GM23248 (cell line): ENCODE measurements at regions of chr3 and their contacts with region 1.

Region 1: DNA sequence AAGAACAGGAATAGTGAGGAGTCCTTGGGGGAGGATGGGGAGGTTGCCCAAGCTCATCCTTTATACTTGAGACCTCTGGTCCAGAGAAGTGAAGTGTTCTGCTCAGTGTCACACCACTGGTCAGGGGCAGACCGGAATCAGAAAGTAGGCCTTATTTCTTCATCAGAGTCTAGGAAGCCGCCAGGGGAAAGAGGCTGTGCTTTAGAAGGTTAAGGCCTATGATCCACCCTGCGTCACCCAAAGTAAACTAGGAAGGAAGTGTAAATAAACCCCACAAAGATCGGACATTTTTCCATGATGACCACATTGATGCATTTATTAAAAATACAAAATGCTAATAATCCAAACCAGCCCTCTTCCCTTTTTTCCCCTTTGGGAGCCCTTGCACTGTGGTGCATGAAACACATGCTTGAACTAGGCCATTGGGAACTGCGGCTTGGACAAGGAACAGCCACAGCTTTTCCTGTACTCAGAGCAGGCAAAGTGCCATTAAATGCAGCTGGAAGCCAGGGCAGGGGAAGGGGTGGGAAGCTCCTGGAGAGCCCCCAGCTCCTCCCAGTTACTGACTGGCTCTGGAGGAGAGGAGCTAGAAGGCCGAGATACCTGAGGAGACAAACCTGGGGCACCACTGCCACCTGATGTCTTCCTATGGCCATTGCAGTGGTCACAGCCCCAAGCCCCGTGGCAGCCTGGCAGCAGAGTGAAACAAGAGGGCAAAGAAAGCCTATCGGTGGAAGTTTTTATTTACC is 37.0 kb downstream of the CDC25A start:
- DNase-seq: peak; percentile 87
- H3K4me3 ChIP-seq: no peak overlapping the region
- H3K27ac ChIP-seq: no peak overlapping the region
- H3K4me1 ChIP-seq: peaks cover 13% of the 10 kb centered on the region; the same call in 1 of the 2 replicates
- H3K27me3 ChIP-seq: no peaks in the 10 kb centered on the region

Region 2: GRCh38 chr3:47836986-47837385 is 314.2 kb before region 1 on chr3:
- in situ Hi-C with region 1: loop called (anchors 10 kb)
- DNase-seq: no peak
- H3K4me3 ChIP-seq: no peak overlapping the region
- H3K27ac ChIP-seq: no peak overlapping the region
- H3K4me1 ChIP-seq: no peaks in the 10 kb centered on the region
- H3K27me3 ChIP-seq: no peaks in the 10 kb centered on the region

Region 3: GRCh38 chr3:47877290-47877689 is 273.9 kb before region 1 on chr3:
- in situ Hi-C with region 1: no loop called
- DNase-seq: peak; percentile 30
- H3K4me3 ChIP-seq: no peak overlapping the region
- H3K27ac ChIP-seq: no peak overlapping the region
- H3K4me1 ChIP-seq: no peaks in the 10 kb centered on the region
- H3K27me3 ChIP-seq: no peaks in the 10 kb centered on the region

Region 4: GRCh38 chr3:47989981-47990440 is 161.2 kb before region 1 on chr3:
- in situ Hi-C with region 1: loop called (anchors 10 kb)
- DNase-seq: peak; percentile 96
- H3K4me3 ChIP-seq: no peak overlapping the region
- H3K27ac ChIP-seq: peak overlapping the region; percentile 14; the same call in 1 of the 2 replicates
- H3K4me1 ChIP-seq: peaks cover 16% of the 10 kb centered on the region
- H3K27me3 ChIP-seq: no peaks in the 10 kb centered on the region

Region 5: GRCh38 chr3:48023377-48023776 is 127.9 kb before region 1 on chr3:
- in situ Hi-C with region 1: no loop called
- DNase-seq: peak; percentile 29
- H3K4me3 ChIP-seq: no peak overlapping the region
- H3K27ac ChIP-seq: peak overlapping the region; percentile 5; the same call in 1 of the 2 replicates
- H3K4me1 ChIP-seq: peaks cover 25% of the 10 kb centered on the region
- H3K27me3 ChIP-seq: no peaks in the 10 kb centered on the region

Region 6: DNA sequence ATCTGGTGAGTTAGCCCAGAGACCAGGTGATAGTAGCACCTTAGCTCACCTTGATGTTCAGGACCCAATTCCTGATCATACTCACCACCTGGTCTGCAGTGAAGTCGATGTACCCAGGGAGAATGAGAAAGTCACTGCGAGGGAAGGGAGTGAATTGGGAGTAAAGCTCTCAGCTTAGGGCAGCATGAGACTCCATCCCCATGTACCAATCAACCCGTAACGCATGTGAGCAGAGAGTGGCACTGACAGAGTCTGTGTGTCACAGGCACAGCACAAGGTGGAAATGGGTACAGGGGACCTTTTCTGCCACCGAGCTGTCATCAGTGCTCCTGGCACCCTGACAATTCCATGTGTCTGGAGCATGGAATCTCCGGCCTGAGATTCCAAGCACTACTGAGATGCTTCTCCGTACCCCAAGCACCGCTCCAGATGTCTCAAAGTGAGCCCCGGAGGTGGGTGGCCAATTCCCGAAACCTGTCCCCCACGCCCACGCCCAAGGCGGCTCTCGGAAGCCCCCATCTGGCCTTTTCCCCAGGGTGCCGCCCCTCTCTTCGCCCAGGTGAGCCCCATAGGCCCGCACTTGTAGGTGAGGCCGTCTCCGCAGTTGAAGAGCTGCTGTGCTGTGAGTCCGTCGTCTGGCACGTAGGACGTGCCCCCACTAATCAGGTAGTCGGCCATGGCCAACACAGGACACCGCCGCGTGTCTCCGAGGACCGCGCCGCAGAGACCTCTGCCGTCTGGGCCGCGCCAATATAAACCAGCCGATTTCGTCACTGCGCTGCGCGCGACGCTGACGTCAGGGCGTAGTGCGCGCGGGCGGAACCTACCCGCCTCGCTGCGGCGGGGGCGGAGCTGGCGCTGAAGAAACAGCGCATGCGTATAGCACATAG is 877.7 kb after region 1 on chr3 and contains the start of gene IMPDH2:
- in situ Hi-C with region 1: no loop called
- DNase-seq: peak; percentile 98
- H3K4me3 ChIP-seq: peak within 1 kb of the TSS; percentile 95
- H3K27ac ChIP-seq: peak within 1 kb of the TSS; percentile 73
- H3K4me1 ChIP-seq: peaks cover 22% of the 10 kb centered on the region
- H3K27me3 ChIP-seq: no peaks in the 10 kb centered on the region
- total RNA-seq, gene IMPDH2: 192 and 210 TPM in 2 replicates